Activated CD4-positive, alpha-beta T cell treated with anti-CD3 and anti-CD28 coated beads, Interleukin-2, amount 10 ng/mL, durations not matched to agents 24 days and 14 days (primary cell): ENCODE measurements at regions of chr22 and their contacts with region 1.

Region 1: GRCh38 chr22:25736378-25737011 is 5.5 kb upstream of the MYO18B start:
- DNase-seq: peak; percentile 92
- H3K4me3 Mint-ChIP-seq: peak overlapping the region; percentile 71
- H3K27ac Mint-ChIP-seq: peak overlapping the region; percentile 98
- H3K4me1 Mint-ChIP-seq: peaks cover 48% of the 10 kb centered on the region
- H3K27me3 Mint-ChIP-seq: no peaks in the 10 kb centered on the region

Region 2: DNA sequence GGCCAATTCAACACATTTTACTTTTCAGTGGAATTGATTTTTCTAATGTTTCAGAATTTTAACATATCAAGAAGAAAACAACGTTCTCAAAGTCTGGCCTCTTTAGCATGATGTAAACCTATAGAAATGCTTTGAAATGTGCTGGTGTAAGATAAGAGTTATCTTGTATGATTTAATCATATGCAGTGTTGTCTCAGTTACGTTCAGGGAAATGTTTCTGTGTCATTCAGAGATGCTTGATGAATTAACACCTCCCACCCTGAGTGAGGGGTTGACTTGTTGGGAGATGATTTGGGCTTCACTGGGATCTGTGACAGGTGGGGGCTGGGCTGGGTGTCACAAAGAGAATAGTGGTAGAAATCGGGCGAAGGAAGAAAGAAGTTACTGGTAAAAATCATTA is 10.3 kb before region 1 on chr22:
- intact Hi-C with region 1: loop called (anchors 1 kb)
- DNase-seq: no peak
- H3K4me3 Mint-ChIP-seq: no peak overlapping the region
- H3K27ac Mint-ChIP-seq: peak overlapping the region; percentile 80
- H3K4me1 Mint-ChIP-seq: peaks cover 19% of the 10 kb centered on the region
- H3K27me3 Mint-ChIP-seq: no peaks in the 10 kb centered on the region